Naive thymus-derived CD4-positive, alpha-beta T cell (primary cell): ENCODE measurements at regions of chr5 and their contacts with region 1.

Region 1: GRCh38 chr5:140107312-140108083 is 6.4 kb upstream of the PURA start:
- DNase-seq: peak; percentile 87 to 96 (median 94)
- ATAC-seq: peak; percentile 92
- H3K4me3 ChIP-seq: peak overlapping the region; percentile 80
- H3K4me3 Mint-ChIP-seq: peak overlapping the region; percentile 93 to 99 (median 97)
- H3K27ac ChIP-seq: peak overlapping the region; percentile 91
- H3K27ac Mint-ChIP-seq: peak overlapping the region; percentile 96 to 99 (median 99)
- H3K4me1 ChIP-seq: peaks cover 19 to 35% of the 10 kb centered on the region in 2 donors
- H3K4me1 Mint-ChIP-seq: peaks cover 30 to 59% (median 47%) of the 10 kb centered on the region in 7 donors
- H3K27me3 ChIP-seq: peaks cover 0 to 7% of the 10 kb centered on the region in 2 donors
- H3K27me3 Mint-ChIP-seq: peaks cover 0 to 77% (median 4%) of the 10 kb centered on the region in 5 donors

Region 2: DNA sequence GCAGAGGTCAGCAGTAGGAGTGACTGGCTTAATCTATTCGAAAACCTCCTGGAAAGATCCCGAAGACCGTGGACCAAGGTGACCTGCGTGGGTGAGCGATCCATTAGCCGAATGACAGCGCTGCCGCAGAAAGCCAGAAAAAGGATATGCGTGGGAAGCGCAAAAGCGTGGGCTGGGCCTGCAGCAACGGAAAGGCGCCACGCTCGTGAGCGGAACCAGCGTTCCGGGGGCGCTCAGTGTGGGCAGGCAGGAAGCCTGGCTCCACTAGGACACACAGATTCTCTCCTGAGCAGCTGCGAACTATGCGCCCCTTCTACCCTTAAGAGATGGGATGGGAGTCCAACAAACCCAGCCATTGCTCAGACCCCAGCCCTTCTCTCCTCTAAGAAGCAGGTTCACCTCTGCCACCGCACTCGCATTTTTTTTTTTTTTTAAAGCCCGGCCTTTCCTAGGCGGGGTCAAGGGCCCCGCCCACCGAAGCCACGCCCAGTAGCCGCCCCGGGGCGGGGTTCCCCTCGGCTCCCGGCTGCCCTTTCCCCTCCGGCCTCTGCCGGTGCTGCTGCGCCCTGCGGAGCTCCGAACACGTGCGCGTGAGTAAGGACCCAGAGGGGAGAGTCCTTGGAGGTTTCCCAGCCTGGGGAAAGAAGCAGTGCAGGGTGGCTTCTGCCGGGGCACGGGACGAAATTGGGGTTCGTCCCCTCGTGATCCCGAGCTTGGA is 833.8 kb before region 1 on chr5:
- CTCF ChIA-PET with region 1: no interaction called
- POLR2A ChIA-PET with region 1: no interaction called
- intact Hi-C with region 1: loop called in 1 of 2 experiments (anchors 5 kb)
- DNase-seq: peak; percentile 71 to 95 (median 83)
- ATAC-seq: peak; percentile 99
- H3K4me3 ChIP-seq: peak overlapping the region; percentile 71
- H3K4me3 Mint-ChIP-seq: peak overlapping the region; percentile 77 to 92 (median 90)
- H3K27ac ChIP-seq: peak overlapping the region; percentile 69
- H3K27ac Mint-ChIP-seq: peak overlapping the region; percentile 54 to 92 (median 85)
- H3K4me1 ChIP-seq: peaks cover 26 to 27% of the 10 kb centered on the region in 2 donors
- H3K4me1 Mint-ChIP-seq: peaks cover 30 to 54% (median 47%) of the 10 kb centered on the region in 7 donors
- H3K27me3 ChIP-seq: no peaks in the 10 kb centered on the region
- H3K27me3 Mint-ChIP-seq: peaks cover 0 to 3% (median 0%) of the 10 kb centered on the region in 5 donors

Region 3: DNA sequence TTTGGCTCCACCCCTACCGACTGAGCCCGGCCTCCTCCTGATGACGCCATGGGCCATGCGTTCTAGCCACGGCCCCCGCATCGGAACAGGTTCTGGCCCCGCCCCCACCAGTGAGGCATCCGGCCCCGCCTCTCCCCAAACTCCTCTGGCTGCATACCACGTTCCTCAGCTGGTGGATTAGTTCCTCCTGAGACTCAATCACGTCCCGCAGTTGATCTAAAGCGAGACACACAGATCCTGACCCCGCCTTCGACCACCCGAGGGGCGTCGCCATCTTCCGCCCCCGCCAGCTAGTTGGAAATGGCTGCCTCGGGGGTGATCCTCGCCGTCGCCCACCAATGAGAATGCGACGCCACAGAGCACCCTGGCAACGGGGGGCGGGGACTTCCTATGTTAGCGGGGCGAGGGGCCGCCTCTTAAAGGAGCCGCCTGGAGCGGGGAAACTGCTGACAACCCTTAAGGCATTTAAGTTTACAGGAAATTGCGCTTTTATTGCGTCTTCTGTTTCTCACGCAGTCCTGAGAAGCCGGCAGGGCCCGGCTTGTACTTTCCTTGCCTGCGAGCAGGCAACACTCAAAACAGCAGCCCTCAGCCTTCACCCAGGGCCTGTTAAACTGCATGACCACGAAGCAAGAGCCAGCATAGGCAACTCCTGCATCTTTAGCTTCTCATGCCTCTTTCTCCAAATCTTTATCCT is 703.6 kb before region 1 on chr5 and contains the start of gene SPATA24:
- CTCF ChIA-PET with region 1: no interaction called
- POLR2A ChIA-PET with region 1: no interaction called
- intact Hi-C with region 1: loop called in 1 of 2 experiments (anchors 2 kb)
- DNase-seq: peak; percentile 90 to 99 (median 98)
- ATAC-seq: peak; percentile 94
- H3K4me3 ChIP-seq: peak within 1 kb of the TSS; percentile 56
- H3K4me3 Mint-ChIP-seq: peak within 1 kb of the TSS; percentile 88 to 98 (median 94)
- H3K27ac ChIP-seq: peak within 1 kb of the TSS; percentile 88
- H3K27ac Mint-ChIP-seq: peak within 1 kb of the TSS; percentile 96 to 100 (median 99)
- H3K4me1 ChIP-seq: peaks cover 16 to 18% of the 10 kb centered on the region in 2 donors
- H3K4me1 Mint-ChIP-seq: peaks cover 26 to 42% (median 36%) of the 10 kb centered on the region in 7 donors
- H3K27me3 ChIP-seq: no peaks in the 10 kb centered on the region
- H3K27me3 Mint-ChIP-seq: no peaks in the 10 kb centered on the region
- total RNA-seq, gene SPATA24: 4.4 to 7.6 (median 5.8) TPM

Region 4: GRCh38 chr5:140073296-140073695 is 34.2 kb before region 1 on chr5:
- CTCF ChIA-PET with region 1: interaction called, 5 read pairs
- POLR2A ChIA-PET with region 1: interaction called, 3 read pairs
- intact Hi-C with region 1: loop called in 1 of 2 experiments (anchors 2 kb)
- DNase-seq: peak in 6 of 9 donors; percentile 25 to 54 (median 44)
- ATAC-seq: no peak
- H3K4me3 ChIP-seq: no peak overlapping the region
- H3K4me3 Mint-ChIP-seq: no peak overlapping the region
- H3K27ac ChIP-seq: no peak overlapping the region
- H3K27ac Mint-ChIP-seq: no peak overlapping the region
- H3K4me1 ChIP-seq: no peaks in the 10 kb centered on the region
- H3K4me1 Mint-ChIP-seq: no peaks in the 10 kb centered on the region
- H3K27me3 ChIP-seq: no peaks in the 10 kb centered on the region
- H3K27me3 Mint-ChIP-seq: peaks cover 12 to 50% (median 24%) of the 10 kb centered on the region in 5 donors

Region 5: DNA sequence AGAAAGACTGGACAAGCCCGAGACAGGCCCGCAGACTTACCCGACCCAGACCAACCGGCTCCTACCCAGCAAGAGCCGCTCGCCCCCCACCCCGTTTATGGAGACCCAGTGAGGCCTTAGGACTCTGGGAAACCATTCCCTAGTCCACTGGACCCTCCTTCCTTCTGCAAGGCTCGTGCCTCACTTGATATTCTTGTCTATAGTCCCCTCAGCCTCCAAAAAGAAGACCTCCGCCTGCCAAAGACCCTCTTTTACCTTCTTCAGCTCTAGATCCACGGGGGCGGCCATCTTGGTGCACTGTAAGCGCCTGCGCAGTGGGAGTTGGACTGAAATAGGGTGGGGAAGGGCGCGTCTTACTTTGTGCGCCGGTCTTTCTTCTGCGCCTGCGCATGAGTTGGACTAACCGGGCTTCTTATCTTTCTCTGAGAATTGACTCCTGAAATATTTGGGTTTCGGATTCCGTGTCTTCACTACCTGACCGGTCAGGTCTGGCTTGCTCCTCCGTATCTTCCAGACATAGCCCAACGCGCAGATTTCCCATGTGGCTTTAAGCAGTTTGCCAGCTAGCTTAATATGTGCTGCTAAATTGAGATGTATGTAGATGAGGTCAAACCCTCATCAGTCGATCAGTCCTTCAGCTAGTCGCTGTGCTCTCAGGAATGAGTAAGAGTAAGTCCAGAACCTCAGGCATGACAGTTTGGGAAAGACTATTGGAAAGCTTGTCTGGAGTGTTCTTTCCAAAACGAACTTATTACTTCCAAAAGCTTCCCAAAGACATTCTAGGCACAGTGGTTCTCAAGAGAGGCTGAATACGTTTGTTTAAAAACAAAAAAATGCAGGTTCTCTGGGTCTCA is 195.5 kb after region 1 on chr5 and contains the start of gene PFDN1:
- CTCF ChIA-PET with region 1: no interaction called
- POLR2A ChIA-PET with region 1: interaction called, 3 read pairs
- intact Hi-C with region 1: loop called (anchors 5 kb)
- DNase-seq: peak; percentile 79 to 94 (median 89)
- ATAC-seq: peak; percentile 99
- H3K4me3 ChIP-seq: peak within 1 kb of the TSS; percentile 90
- H3K4me3 Mint-ChIP-seq: peak within 1 kb of the TSS; percentile 92 to 100 (median 98)
- H3K27ac ChIP-seq: peak within 1 kb of the TSS; percentile 91
- H3K27ac Mint-ChIP-seq: peak within 1 kb of the TSS; percentile 95 to 100 (median 98)
- H3K4me1 ChIP-seq: peaks cover 10 to 11% of the 10 kb centered on the region in 2 donors
- H3K4me1 Mint-ChIP-seq: peaks cover 4 to 39% (median 33%) of the 10 kb centered on the region in 7 donors
- H3K27me3 ChIP-seq: no peaks in the 10 kb centered on the region
- H3K27me3 Mint-ChIP-seq: peaks cover 0 to 9% (median 5%) of the 10 kb centered on the region in 5 donors
- total RNA-seq, gene PFDN1: 24.8 to 52.7 (median 28.2) TPM

Region 6: GRCh38 chr5:140710899-140711552 is 603.5 kb after region 1 on chr5:
- CTCF ChIA-PET with region 1: no interaction called
- POLR2A ChIA-PET with region 1: no interaction called
- intact Hi-C with region 1: loop called (anchors 5 to 10 kb)
- DNase-seq: peak; percentile 57 to 94 (median 87)
- ATAC-seq: peak; percentile 89
- H3K4me3 ChIP-seq: peak overlapping the region; percentile 96
- H3K4me3 Mint-ChIP-seq: peak overlapping the region; percentile 95 to 100 (median 99)
- H3K27ac ChIP-seq: peak overlapping the region; percentile 72
- H3K27ac Mint-ChIP-seq: peak overlapping the region; percentile 98 to 100 (median 99)
- H3K4me1 ChIP-seq: peaks cover 0 to 5% of the 10 kb centered on the region in 2 donors
- H3K4me1 Mint-ChIP-seq: peaks cover 6 to 35% (median 25%) of the 10 kb centered on the region in 7 donors
- H3K27me3 ChIP-seq: no peaks in the 10 kb centered on the region
- H3K27me3 Mint-ChIP-seq: peaks cover 0 to 11% (median 0%) of the 10 kb centered on the region in 5 donors